AG04449 (cell line): ENCODE measurements at regions of chr7 and their contacts with region 1.

Region 1: DNA sequence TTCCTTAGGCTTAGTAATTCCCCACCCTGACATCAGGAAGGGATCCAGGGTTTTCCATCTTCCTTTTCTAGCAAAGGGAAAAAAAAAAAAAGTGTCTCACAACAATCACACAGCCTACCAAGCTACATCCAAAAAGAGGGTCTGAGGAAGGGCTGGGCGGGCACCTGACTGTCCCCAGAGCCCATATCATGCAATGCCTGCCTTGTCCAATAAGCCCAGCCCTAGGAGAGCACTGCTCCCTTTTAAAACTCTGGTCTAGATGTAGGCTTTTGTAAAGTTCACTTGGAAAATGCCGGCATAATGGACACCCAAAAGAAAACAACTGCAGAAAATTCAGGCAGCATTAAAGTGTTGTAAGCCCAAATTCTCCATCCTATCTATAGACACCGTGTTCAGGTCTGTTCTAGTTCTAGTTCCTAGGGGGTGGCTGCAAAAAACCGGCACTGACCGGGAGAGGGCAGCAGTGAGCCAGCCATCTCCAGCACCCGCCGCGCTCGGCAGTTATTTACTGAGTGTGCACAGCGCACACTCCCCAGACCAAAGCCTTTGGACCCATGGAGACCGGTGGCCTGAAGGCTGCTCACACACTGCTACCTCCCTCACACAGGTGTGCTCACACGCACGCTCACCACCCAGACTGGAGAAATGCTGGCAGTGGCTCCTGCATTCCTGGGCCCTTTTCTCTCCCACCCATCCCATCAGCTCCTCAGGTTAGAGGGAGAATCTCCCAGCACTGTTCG is 48.7 kb downstream of the PODXL start:
- DNase-seq: no peak
- H3K4me3 ChIP-seq: no peak overlapping the region
- CTCF ChIP-seq: peak; percentile 90

Region 2: GRCh38 chr7:131488361-131488760 is 19.4 kb before region 1 on chr7:
- CTCF ChIA-PET with region 1: interaction called, 114 read pairs
- POLR2A ChIA-PET with region 1: no interaction called
- DNase-seq: no peak
- H3K4me3 ChIP-seq: no peak overlapping the region
- CTCF ChIP-seq: no peak

Region 3: DNA sequence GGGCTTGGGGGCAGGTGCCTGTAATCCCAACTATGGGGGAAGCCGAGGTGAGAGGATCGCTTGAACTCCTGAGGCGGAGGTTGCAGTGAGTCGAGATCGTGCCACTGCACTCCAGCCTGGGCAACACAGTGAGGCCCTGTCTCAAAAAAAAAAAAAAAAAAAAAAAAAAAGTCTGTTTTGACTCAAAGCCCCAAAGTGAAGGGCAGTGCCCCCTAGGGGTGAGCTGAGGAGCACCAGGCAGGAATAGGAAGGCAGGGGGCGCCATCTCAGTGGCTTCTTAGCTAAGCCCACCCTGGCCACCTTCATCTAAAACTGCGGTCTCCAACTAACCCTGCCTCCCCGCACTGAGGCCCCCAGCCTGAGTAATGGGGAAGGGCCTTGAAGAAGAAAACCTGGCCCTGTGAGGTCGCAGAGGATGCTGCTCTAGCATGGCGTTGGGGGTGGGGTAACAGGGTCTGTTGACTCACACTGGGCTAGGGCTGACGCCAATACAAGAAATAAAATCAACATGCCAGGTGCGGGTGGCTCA is 38.9 kb after region 1 on chr7:
- CTCF ChIA-PET with region 1: interaction called, 34 read pairs
- POLR2A ChIA-PET with region 1: no interaction called
- DNase-seq: no peak
- H3K4me3 ChIP-seq: no peak overlapping the region
- CTCF ChIP-seq: peak; percentile 69